ENCODE measurements at regions of chr5 and their contacts with region 1.

Region 1: DNA sequence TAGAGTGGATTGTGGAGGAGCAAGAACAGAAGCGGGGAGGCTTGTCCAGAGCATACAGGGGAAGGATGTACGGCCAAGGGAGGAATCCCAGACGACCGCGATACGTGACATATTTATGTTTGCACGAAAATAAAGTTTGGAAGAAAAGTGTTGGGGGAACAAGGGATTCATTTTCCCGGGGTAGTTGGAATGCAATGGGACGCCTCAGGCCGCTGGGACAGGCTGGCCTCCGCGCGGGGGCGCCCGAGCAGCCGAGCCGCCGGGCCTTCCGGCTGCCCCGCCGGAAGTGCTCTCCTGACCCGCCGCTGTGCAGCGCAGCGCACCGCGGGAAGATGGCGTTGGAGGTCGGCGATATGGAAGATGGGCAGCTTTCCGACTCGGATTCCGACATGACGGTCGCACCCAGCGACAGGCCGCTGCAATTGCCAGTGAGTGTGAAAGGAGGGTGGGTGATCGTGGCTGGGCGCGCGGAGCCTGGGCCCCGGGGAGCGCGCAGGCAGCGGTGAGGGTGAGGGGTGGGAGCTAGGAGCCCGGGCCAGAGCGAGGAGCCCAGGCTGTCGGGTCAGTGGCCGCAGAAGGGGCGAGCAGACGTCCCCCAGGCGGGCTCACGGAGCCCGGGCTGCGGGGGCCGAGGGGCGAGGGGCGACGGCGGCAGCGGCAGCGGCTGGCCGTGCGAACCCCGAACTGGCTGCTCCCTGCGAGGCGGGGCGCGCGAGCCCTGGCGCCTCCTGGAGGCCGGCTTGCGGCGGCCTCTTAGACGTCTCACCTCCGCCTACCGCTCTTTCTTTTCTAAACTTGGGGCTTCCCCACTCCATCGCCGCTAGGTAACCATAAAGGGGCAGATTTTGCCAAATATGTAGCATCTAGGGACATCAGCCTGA is at the start of gene PHAX:
- DNase-seq: peak; percentile 60
- ATAC-seq: peak; percentile 98
- H3K4me3 ChIP-seq: peak within 1 kb of the TSS; percentile 85 to 96 (median 91)
- H3K27ac ChIP-seq: peak within 1 kb of the TSS; percentile 66
- H3K4me1 ChIP-seq: peaks cover 50% of the 10 kb centered on the region
- H3K27me3 ChIP-seq: no peaks in the 10 kb centered on the region; a peak in 1 of 5 replicates
- CTCF ChIP-seq: peak; percentile 84
- EP300 ChIP-seq: no peak
- POLR2A ChIP-seq: peak; percentile 74 to 88
- RAD21 ChIP-seq: peak; percentile 19; the same call in 1 of the 2 replicates
- total RNA-seq, gene PHAX: 59.7 and 95.0 TPM in 2 replicates

Region 2: GRCh38 chr5:126031989-126032716 is 568.7 kb before region 1 on chr5:
- CTCF ChIA-PET with region 1: no interaction called
- POLR2A ChIA-PET with region 1: no interaction called
- in situ Hi-C with region 1: no loop called
- intact Hi-C with region 1: no loop called
- DNase-seq: no peak
- ATAC-seq: no peak
- H3K4me3 ChIP-seq: no peak overlapping the region
- H3K27ac ChIP-seq: no peak overlapping the region
- H3K4me1 ChIP-seq: no peaks in the 10 kb centered on the region
- H3K27me3 ChIP-seq: no peaks in the 10 kb centered on the region
- CTCF ChIP-seq: no peak
- EP300 ChIP-seq: no peak
- POLR2A ChIP-seq: no peak
- RAD21 ChIP-seq: no peak

Region 3: DNA sequence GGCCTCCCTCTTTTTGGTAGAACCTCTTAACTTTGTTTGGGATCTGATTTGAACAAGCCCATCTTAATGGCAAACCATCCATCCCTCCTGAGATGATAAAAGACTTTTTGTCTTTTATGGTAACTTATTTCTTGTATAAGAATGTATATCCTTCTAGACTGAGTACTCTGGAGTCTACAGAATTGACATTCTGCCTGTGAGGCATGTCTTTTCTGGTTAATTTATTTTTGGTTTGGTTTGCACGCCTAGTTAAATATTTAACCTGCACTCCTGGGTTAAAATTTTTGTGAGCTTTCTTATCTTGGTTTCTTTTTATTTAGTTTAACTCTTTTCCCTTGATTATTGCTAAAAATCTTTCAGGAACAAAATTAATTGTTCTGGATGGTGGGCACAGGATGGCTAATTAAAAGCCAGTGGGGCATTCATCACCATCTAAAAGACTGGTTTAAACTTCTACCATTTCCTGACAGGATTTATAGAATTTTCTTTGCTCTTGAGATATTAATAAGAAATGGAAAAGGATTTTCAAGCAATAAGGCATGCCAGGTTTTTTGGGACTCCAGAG is 50.2 kb after region 1 on chr5:
- CTCF ChIA-PET with region 1: no interaction called
- POLR2A ChIA-PET with region 1: interaction called, 12 read pairs
- in situ Hi-C with region 1: no loop called
- intact Hi-C with region 1: loop called (anchors 2 kb)
- DNase-seq: no peak
- ATAC-seq: no peak
- H3K4me3 ChIP-seq: peak overlapping the region in 1 of 3 experiments; percentile 9; a peak in 1 of 6 replicates
- H3K27ac ChIP-seq: peak overlapping the region; percentile 82
- H3K4me1 ChIP-seq: peaks cover 78% of the 10 kb centered on the region
- H3K27me3 ChIP-seq: no peaks in the 10 kb centered on the region
- CTCF ChIP-seq: no peak
- EP300 ChIP-seq: no peak
- POLR2A ChIP-seq: no peak
- RAD21 ChIP-seq: no peak

Region 4: DNA sequence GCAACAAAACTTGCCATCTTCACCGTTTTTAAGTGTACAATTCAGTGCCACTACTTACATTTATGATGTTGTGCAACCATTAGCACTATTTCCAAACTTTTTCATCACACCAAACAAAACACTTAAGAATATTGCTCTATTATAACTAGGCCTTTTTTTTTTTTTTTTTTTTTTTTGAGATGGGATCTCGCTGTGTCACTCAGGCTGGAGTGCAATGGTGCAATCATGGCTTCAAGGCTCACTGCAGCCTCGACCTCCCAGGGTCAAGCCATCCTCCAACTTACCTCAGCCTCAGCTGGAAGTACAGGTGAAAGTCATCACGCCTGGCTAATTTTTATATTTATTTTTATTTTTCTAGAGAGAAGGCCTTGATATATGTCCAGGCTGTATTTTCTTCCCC is 153.7 kb after region 1 on chr5:
- CTCF ChIA-PET with region 1: no interaction called
- POLR2A ChIA-PET with region 1: no interaction called
- in situ Hi-C with region 1: no loop called
- intact Hi-C with region 1: no loop called
- DNase-seq: no peak
- ATAC-seq: no peak
- H3K4me3 ChIP-seq: no peak overlapping the region
- H3K27ac ChIP-seq: no peak overlapping the region
- H3K4me1 ChIP-seq: no peaks in the 10 kb centered on the region
- H3K27me3 ChIP-seq: no peaks in the 10 kb centered on the region; a peak in 1 of 5 replicates
- CTCF ChIP-seq: no peak
- EP300 ChIP-seq: no peak
- POLR2A ChIP-seq: no peak
- RAD21 ChIP-seq: no peak